Activated B cell treated with CpG ODN at 0.5 μM for 24 hours (primary cell): ENCODE measurements at regions of chr22 and their contacts with region 1.

Region 1: GRCh38 chr22:38569972-38570778 is at the start of gene DMC1:
- DNase-seq: peak; percentile 89
- ATAC-seq: peak; percentile 97
- H3K4me3 Mint-ChIP-seq: peak within 1 kb of the TSS; percentile 82
- H3K27ac Mint-ChIP-seq: peak within 1 kb of the TSS; percentile 65
- H3K4me1 Mint-ChIP-seq: peaks cover 17% of the 10 kb centered on the region
- H3K27me3 Mint-ChIP-seq: no peaks in the 10 kb centered on the region
- CTCF ChIP-seq: no peak
- total RNA-seq, gene DMC1: 0.54 and 0.91 TPM in 2 replicates

Region 2: DNA sequence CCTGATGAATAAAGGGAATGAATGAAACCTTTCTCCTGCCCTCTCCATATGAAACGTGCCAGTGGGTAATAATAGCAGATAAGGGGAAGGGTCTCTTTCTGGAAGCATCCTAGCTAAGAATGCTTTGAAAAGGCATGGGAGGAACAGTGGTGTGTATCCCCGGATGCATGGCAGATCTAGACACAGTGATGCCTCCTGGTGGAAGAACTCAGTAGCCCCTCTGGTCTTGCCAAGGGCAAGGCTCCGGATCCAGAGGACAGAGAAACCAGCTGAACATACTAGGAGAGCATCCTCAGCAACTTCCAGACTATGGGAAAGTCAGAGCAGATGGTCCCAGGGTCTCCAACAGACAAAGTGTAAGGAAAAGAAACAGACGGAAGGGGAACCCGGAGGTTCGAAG is 466.1 kb before region 1 on chr22:
- CTCF ChIA-PET with region 1: no interaction called
- POLR2A ChIA-PET with region 1: no interaction called
- intact Hi-C with region 1: loop called (anchors 2 kb)
- DNase-seq: no peak
- ATAC-seq: no peak
- H3K4me3 Mint-ChIP-seq: no peak overlapping the region
- H3K27ac Mint-ChIP-seq: no peak overlapping the region
- H3K4me1 Mint-ChIP-seq: no peaks in the 10 kb centered on the region
- H3K27me3 Mint-ChIP-seq: no peaks in the 10 kb centered on the region
- CTCF ChIP-seq: no peak

Region 3: DNA sequence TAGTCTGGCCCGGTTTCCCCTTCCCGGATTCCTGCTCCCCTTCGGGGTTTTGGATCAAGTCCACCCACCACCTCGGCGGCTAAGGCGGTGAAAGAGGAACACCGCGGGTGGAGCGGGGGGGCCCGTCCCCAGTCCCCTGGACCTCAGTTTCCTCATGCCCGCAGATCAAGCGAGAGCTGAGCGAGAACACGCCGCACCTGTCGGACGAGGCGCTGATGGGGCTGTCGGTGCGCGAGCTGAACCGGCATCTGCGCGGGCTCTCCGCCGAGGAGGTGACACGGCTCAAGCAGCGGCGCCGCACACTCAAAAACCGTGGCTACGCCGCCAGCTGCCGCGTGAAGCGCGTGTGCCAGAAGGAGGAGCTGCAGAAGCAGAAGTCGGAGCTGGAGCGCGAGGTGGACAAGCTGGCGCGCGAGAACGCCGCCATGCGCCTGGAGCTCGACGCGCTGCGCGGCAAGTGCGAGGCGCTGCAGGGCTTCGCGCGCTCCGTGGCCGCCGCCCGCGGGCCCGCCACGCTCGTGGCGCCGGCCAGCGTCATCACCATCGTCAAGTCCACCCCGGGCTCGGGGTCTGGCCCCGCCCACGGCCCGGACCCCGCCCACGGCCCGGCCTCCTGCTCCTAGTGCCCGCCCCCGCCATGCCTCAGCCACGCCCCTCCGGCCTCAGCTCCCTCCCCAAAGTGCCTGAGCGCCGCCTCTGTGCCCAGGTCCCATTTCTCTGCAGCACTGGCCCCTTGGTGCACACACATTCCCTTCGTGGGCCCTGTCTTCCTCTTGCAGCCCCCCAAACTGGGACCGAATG is 355.7 kb before region 1 on chr22:
- CTCF ChIA-PET with region 1: interaction called, 3 read pairs
- POLR2A ChIA-PET with region 1: no interaction called
- intact Hi-C with region 1: loop called (anchors 1 kb)
- DNase-seq: peak; percentile 68
- ATAC-seq: peak; percentile 89
- H3K4me3 Mint-ChIP-seq: peak overlapping the region; percentile 71
- H3K27ac Mint-ChIP-seq: peak overlapping the region; percentile 18
- H3K4me1 Mint-ChIP-seq: peaks cover 24% of the 10 kb centered on the region
- H3K27me3 Mint-ChIP-seq: no peaks in the 10 kb centered on the region
- CTCF ChIP-seq: no peak

Region 4: GRCh38 chr22:38338772-38339379 is 231.3 kb before region 1 on chr22:
- CTCF ChIA-PET with region 1: no interaction called
- POLR2A ChIA-PET with region 1: no interaction called
- intact Hi-C with region 1: no loop called
- DNase-seq: no peak
- ATAC-seq: no peak
- H3K4me3 Mint-ChIP-seq: no peak overlapping the region
- H3K27ac Mint-ChIP-seq: no peak overlapping the region
- H3K4me1 Mint-ChIP-seq: peaks cover 8% of the 10 kb centered on the region
- H3K27me3 Mint-ChIP-seq: peaks cover 4% of the 10 kb centered on the region
- CTCF ChIP-seq: no peak

Region 5: DNA sequence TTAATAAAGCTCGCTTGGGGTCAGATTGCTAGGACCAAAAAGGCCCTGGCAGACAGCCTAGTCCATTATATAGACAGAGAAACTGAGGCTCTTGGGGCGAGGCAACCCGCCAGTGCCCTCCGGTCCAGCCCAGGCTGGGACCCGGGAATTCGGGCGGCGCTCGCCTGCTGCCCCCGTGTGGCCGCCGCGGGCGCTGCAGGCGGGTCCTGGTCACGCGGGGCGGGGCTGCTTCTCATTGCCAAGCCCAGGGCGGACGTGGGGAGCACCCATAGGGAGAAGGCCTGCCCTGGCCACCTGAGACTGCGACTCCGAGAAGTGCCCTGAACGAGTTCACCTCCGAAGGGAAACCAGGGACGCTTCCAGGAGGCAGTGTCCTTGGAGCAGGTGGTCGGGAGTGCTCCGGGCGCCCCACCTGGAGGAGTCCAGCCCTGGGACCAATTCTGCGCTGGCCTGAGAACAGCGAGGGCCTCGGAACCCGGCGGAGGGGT is 217.0 kb before region 1 on chr22:
- CTCF ChIA-PET with region 1: no interaction called
- POLR2A ChIA-PET with region 1: no interaction called
- intact Hi-C with region 1: loop called (anchors 5 kb)
- DNase-seq: peak; percentile 77
- ATAC-seq: peak; percentile 82
- H3K4me3 Mint-ChIP-seq: no peak overlapping the region
- H3K27ac Mint-ChIP-seq: peak overlapping the region; percentile 30
- H3K4me1 Mint-ChIP-seq: peaks cover 9% of the 10 kb centered on the region
- H3K27me3 Mint-ChIP-seq: no peaks in the 10 kb centered on the region
- CTCF ChIP-seq: peak; percentile 87

Region 6: DNA sequence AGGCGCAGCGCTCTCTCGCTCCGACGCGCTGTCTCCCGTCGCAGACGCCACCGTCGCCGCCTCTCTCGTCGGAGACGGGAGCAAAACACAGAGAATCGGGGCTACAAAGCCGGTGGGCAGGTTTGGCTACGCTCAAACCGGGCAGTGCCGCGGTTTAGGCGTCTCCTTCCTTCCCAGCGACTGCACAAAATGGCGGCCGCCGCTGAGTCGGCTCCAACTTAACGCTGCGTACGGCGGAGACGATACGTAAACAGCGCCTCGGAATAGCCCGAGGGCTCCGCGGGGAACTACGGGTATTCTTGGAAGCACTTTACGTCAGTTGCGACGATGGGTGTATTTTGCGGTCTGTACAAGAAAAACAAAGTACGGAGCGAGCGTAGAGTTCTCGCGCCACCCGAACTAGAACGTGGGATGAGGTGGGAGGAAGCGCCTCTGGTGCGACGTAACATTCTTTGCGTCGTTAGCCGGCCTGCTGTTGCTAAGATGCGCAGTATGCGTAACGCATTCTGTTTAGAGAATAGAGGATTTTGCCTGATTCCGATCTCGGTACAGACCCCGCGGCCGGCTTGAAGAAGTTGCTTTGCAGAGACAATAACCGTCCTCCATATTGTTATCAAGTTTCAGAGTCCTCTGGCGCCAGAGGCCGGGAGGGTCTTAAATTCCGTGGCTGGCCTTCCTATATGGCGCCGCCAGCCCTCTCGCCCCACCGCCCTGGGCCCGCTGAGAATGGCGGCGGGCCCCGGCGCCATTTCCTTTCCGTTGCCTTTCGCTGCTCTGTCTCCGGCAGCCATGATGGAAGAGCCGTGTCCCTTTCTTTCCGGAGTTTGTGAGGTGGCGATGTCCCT is 63.8 kb before region 1 on chr22 and contains the start of gene DDX17:
- CTCF ChIA-PET with region 1: interaction called, 6 read pairs
- POLR2A ChIA-PET with region 1: interaction called, 5 read pairs
- intact Hi-C with region 1: loop called (anchors 1 kb)
- DNase-seq: peak; percentile 91
- ATAC-seq: peak; percentile 89
- H3K4me3 Mint-ChIP-seq: peak within 1 kb of the TSS; percentile 99
- H3K27ac Mint-ChIP-seq: peak within 1 kb of the TSS; percentile 100
- H3K4me1 Mint-ChIP-seq: peaks cover 41% of the 10 kb centered on the region
- H3K27me3 Mint-ChIP-seq: no peaks in the 10 kb centered on the region
- CTCF ChIP-seq: no peak
- total RNA-seq, gene DDX17: 533 and 612 TPM in 2 replicates